Motor neuron (in vitro differentiated cells): ENCODE measurements at regions of chr2 and their contacts with region 1.

Region 1: DNA sequence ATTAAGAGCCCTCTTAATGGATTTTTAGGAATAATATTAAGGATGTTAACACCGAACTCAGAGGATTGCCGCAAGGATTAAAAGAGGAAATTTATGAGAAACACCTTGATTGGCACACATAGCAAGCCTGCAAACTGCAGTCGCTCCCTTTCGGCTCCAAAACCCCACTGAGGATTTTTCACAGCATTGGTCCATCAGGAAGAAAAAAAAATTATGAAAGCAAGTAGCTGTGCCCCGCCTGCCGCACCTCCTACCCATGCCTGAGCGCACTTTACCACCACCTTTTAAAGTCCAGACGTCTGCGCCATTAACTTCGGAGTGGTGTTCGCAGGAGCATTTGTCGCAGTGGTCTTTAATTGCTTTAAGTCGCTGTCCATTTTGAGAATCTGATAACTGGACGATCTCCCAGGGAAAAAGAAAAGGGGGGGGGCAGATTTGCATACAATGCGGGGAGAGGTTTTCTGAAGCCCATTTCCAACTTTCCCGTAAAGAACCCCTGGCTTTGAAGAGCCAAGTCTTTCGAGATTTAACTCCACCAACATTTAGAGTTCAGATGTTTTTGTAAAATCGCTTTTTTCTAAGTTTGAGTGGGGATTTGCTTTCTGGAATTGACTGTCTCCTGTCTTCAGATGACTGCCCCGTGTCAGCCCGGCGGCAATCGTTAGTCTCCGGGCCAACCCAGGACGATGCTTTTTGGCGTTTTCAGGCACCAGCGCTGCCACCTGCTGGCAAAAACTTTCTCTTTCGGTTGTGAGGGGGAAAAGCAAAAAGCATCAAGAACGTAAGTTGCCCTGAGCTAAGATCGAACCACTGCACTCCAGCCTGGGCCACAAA is 914 bp upstream of the TRABD2A start:
- ATAC-seq: peak; percentile 58 to 93 (median 78)
- H3K4me3 ChIP-seq: peak overlapping the region; percentile 1 to 43 (median 36)
- H3K27ac ChIP-seq: no peak overlapping the region
- H3K4me1 ChIP-seq: peaks cover 10 to 13% of the 10 kb centered on the region in 2 donors

Region 2: GRCh38 chr2:84516234-84516986 is 365.4 kb before region 1 on chr2 and contains the start of gene DNAH6:
- in situ Hi-C with region 1: loop called in 1 of 9 experiments (anchors 25 kb)
- ATAC-seq: peak; percentile 98 to 100 (median 99)
- H3K4me3 ChIP-seq: peak within 1 kb of the TSS; percentile 32 to 48 (median 42)
- H3K27ac ChIP-seq: peak within 1 kb of the TSS; percentile 3 to 57
- H3K4me1 ChIP-seq: peaks cover 4 to 5% of the 10 kb centered on the region in 2 donors
- total RNA-seq, gene DNAH6: 0.14 to 7.4 (median 1.1) TPM